ENCODE measurements at regions of chr1 and their contacts with region 1.

Region 1: GRCh38 chr1:39672551-39672947 is 642 bp upstream of the NT5C1A start:
- DNase-seq: peak; percentile 59
- ATAC-seq: peak; percentile 39
- H3K4me3 Mint-ChIP-seq: peak overlapping the region; percentile 31
- H3K27ac Mint-ChIP-seq: no peak overlapping the region
- H3K4me1 Mint-ChIP-seq: peaks cover 7% of the 10 kb centered on the region
- H3K27me3 Mint-ChIP-seq: peaks cover 27% of the 10 kb centered on the region

Region 2: DNA sequence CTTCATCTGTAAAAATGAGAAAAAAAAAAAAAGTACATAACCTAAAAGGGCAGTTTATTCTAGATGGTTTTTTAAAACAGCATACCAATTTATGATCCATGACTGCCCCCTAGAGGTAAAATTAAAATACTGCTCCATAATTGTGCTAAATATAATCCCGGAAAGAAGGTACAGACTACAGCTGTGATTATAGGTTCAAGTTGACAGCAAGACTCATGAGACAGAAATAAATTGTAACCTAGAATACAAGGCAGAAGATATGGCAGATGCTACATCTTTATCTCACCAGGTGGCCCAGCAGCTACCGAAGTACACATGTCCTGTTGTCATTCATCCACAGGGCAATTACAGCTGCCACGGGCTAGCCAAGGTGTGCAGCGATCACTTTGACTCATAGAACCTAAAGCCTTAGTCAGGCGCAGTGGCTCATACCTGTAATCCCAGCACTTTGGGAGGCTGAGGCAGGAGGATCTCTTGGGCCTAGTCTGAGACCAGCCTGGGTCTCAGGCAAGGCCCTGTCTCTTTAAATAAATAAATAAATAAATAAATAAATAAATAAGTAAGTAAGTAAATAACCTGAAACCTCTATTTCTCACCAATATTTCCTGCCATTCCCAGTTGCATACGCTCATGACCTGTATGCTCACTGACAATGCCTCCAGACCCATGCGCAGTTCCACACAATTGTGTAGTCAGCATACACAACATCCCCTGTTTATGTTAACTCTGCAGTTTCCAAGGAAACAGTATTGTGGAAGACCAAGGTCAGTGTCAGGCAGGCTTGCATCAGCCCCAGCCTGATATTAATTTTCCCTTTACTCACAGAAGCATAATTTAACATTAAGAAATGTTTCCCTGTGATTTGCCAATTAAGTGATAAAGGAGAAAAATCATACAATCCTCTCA is 47.8 kb after region 1 on chr1:
- CTCF ChIA-PET with region 1: interaction called, 6 read pairs
- POLR2A ChIA-PET with region 1: no interaction called
- intact Hi-C with region 1: loop called (anchors 1 to 5 kb)
- DNase-seq: no peak
- ATAC-seq: peak; percentile 73
- H3K4me3 Mint-ChIP-seq: no peak overlapping the region
- H3K27ac Mint-ChIP-seq: no peak overlapping the region
- H3K4me1 Mint-ChIP-seq: no peaks in the 10 kb centered on the region
- H3K27me3 Mint-ChIP-seq: peaks cover 38% of the 10 kb centered on the region

Region 3: GRCh38 chr1:40610156-40610555 is 937.6 kb after region 1 on chr1:
- CTCF ChIA-PET with region 1: no interaction called
- POLR2A ChIA-PET with region 1: no interaction called
- intact Hi-C with region 1: no loop called
- DNase-seq: no peak
- ATAC-seq: no peak
- H3K4me3 Mint-ChIP-seq: no peak overlapping the region
- H3K27ac Mint-ChIP-seq: no peak overlapping the region
- H3K4me1 Mint-ChIP-seq: no peaks in the 10 kb centered on the region
- H3K27me3 Mint-ChIP-seq: no peaks in the 10 kb centered on the region